MCF 10A (cell line): ENCODE measurements at regions of chr2 and their contacts with region 1.

Region 1: DNA sequence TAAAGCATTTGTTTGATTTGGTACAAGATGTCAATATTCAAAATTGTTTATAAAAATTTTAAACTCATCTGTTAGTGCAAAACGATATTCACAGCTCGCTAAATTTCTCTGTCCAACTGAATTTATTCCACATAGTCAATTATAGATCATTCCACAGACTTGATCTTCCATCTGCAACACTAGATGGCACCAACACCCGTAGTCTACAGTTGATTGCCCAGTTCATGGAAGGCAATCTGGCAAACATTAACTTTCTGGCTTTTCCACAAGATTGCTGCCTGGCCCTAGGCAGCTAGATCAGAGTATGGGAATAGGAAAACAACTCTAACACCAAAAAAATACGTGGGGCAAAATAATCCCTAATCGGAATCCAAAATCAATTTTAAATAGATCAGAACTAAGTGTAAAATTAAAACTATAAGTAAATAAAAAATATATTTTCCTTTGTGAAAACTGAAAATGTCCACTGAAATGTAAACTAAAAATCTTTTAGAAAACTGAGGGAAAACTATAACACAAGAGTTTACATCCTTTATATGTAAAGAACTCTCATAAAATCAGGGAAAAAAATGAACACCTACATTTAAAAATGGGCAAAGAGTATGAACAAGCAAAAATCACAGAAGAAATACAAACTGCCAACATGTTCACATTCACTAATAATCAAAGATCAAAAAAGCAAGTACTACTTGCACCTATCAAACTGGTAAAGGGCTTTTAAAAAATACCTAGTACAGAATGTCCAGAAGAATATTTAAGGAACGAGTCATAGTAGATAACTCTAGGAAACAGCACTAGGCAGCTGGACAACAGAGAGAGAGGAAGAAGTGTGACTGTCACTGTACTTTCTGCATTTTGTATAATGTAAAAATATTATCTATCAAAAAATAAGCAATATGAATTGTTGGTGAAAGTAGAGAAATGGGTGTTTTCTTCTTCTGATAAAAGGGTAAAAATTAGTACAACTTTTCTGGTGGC is 35.0 kb downstream of the RTN4 start:
- DNase-seq: peak; percentile 82
- H3K4me3 Mint-ChIP-seq: peak overlapping the region; percentile 58
- H3K27ac Mint-ChIP-seq: peak overlapping the region; percentile 86
- H3K4me1 Mint-ChIP-seq: peaks cover 46% of the 10 kb centered on the region
- H3K27me3 Mint-ChIP-seq: no peaks in the 10 kb centered on the region
- CTCF ChIP-seq: peak; percentile 56

Region 2: GRCh38 chr2:54966165-54966832 is 49.0 kb before region 1 on chr2:
- CTCF ChIA-PET with region 1: interaction called, 11 read pairs
- POLR2A ChIA-PET with region 1: interaction called, 13 read pairs
- intact Hi-C with region 1: no loop called
- DNase-seq: peak; percentile 76
- H3K4me3 Mint-ChIP-seq: peak overlapping the region; percentile 12
- H3K27ac Mint-ChIP-seq: peak overlapping the region; percentile 68
- H3K4me1 Mint-ChIP-seq: peaks cover 45% of the 10 kb centered on the region
- H3K27me3 Mint-ChIP-seq: no peaks in the 10 kb centered on the region
- CTCF ChIP-seq: no peak

Region 3: DNA sequence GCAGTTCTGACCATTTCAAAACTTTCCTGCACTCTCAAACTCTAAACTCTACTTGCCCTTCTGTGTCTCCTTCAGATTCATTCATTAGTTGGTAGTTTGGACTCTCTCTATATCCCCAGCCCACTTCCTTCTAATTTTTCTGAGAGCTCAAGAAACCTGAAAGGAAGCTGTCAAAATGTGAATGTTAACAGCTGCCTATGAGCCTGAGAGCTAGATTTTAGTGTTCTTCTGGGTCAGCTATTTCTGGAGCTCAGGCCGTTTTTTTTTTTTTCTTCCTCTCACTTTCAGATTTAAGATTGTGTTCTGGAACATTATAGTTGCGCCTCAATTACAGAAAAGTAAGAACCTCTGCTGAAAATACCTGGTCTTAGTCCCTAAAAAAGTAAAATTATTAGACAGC is 38.1 kb before region 1 on chr2:
- CTCF ChIA-PET with region 1: interaction called, 11 read pairs
- POLR2A ChIA-PET with region 1: interaction called, 10 read pairs
- intact Hi-C with region 1: no loop called
- DNase-seq: no peak
- H3K4me3 Mint-ChIP-seq: no peak overlapping the region
- H3K27ac Mint-ChIP-seq: no peak overlapping the region
- H3K4me1 Mint-ChIP-seq: peaks cover 21% of the 10 kb centered on the region
- H3K27me3 Mint-ChIP-seq: no peaks in the 10 kb centered on the region
- CTCF ChIP-seq: no peak

Region 4: GRCh38 chr2:54999182-54999581 is 16.1 kb before region 1 on chr2:
- CTCF ChIA-PET with region 1: interaction called, 10 read pairs
- POLR2A ChIA-PET with region 1: interaction called, 58 read pairs
- intact Hi-C with region 1: no loop called
- DNase-seq: peak; percentile 68
- H3K4me3 Mint-ChIP-seq: peak overlapping the region; percentile 62
- H3K27ac Mint-ChIP-seq: peak overlapping the region; percentile 85
- H3K4me1 Mint-ChIP-seq: peaks cover 49% of the 10 kb centered on the region
- H3K27me3 Mint-ChIP-seq: no peaks in the 10 kb centered on the region
- CTCF ChIP-seq: no peak

Region 5: GRCh38 chr2:55026202-55026601 is 11.0 kb after region 1 on chr2:
- CTCF ChIA-PET with region 1: interaction called, 15 read pairs
- POLR2A ChIA-PET with region 1: interaction called, 31 read pairs
- intact Hi-C with region 1: no loop called
- DNase-seq: peak; percentile 57
- H3K4me3 Mint-ChIP-seq: no peak overlapping the region
- H3K27ac Mint-ChIP-seq: no peak overlapping the region
- H3K4me1 Mint-ChIP-seq: peaks cover 7% of the 10 kb centered on the region
- H3K27me3 Mint-ChIP-seq: no peaks in the 10 kb centered on the region
- CTCF ChIP-seq: no peak

Region 6: GRCh38 chr2:55168221-55169154 is 153.2 kb after region 1 on chr2:
- CTCF ChIA-PET with region 1: interaction called, 169 read pairs
- POLR2A ChIA-PET with region 1: interaction called, 10 read pairs
- intact Hi-C with region 1: loop called (anchors 1 kb)
- DNase-seq: peak; percentile 72
- H3K4me3 Mint-ChIP-seq: no peak overlapping the region
- H3K27ac Mint-ChIP-seq: no peak overlapping the region
- H3K4me1 Mint-ChIP-seq: peaks cover 13% of the 10 kb centered on the region
- H3K27me3 Mint-ChIP-seq: no peaks in the 10 kb centered on the region
- CTCF ChIP-seq: peak; percentile 81

Region 7: GRCh38 chr2:55175254-55176025 is 160.2 kb after region 1 on chr2:
- CTCF ChIA-PET with region 1: interaction called, 169 read pairs
- POLR2A ChIA-PET with region 1: interaction called, 11 read pairs
- intact Hi-C with region 1: loop called (anchors 1 kb)
- DNase-seq: peak; percentile 51
- H3K4me3 Mint-ChIP-seq: no peak overlapping the region
- H3K27ac Mint-ChIP-seq: peak overlapping the region; percentile 1
- H3K4me1 Mint-ChIP-seq: peaks cover 10% of the 10 kb centered on the region
- H3K27me3 Mint-ChIP-seq: no peaks in the 10 kb centered on the region
- CTCF ChIP-seq: peak; percentile 70